RWPE1 (cell line): ENCODE measurements at regions of chr2 and their contacts with region 1.

Region 1: GRCh38 chr2:189142893-189143759 is 36.4 kb downstream of the COL5A2 start:
- DNase-seq: peak; percentile 45
- H3K27ac ChIP-seq: no peak overlapping the region
- CTCF ChIP-seq: peak; percentile 43

Region 2: DNA sequence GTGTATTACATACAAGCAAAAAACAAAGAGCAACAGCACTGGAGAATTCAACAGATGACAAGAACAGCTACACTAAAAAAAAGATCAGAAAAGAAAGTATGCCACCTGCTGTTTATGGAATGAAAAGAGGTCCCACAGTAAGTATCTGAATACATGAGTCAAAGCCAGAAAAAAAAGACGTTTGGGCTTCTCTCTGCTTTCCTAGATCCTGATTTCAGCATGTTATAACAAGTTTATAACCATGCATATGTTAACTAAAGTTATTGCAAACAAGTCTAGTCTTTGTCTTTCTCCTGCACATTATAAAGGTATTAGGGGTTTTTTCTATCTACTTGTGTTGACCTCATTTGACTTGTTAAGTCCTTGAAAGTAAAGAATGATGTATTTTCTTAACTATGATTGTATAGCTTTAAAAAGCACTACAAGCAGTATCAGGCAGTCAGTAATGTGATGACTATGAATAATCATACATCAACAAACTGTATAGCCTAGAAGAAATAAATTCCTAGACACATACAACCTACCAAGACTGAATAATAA is 144.9 kb after region 1 on chr2:
- CTCF ChIA-PET with region 1: interaction called, 27 read pairs
- POLR2A ChIA-PET with region 1: no interaction called
- DNase-seq: peak; percentile 46
- H3K27ac ChIP-seq: no peak overlapping the region
- CTCF ChIP-seq: peak; percentile 73